ENCODE measurements at regions of chr1 and their contacts with region 1.

Region 1: GRCh38 chr1:62175568-62176179 is 19.0 kb upstream of the L1TD1 start:
- DNase-seq: no peak
- H3K4me3 ChIP-seq: no peak overlapping the region
- H3K27ac ChIP-seq: no peak overlapping the region
- H3K4me1 ChIP-seq: no peaks in the 10 kb centered on the region
- H3K27me3 ChIP-seq: no peaks in the 10 kb centered on the region
- CTCF ChIP-seq: peak in 2 of 3 experiments; percentile 39 to 66
- POLR2A ChIP-seq: no peak

Region 2: GRCh38 chr1:62407405-62408009 is 231.8 kb after region 1 on chr1:
- intact Hi-C with region 1: loop called (anchors 2 kb)
- DNase-seq: no peak
- H3K4me3 ChIP-seq: no peak overlapping the region
- H3K27ac ChIP-seq: no peak overlapping the region
- H3K4me1 ChIP-seq: no peaks in the 10 kb centered on the region
- H3K27me3 ChIP-seq: no peaks in the 10 kb centered on the region
- CTCF ChIP-seq: peak; percentile 25 to 87 (median 71)
- POLR2A ChIP-seq: no peak

Measured in vagina (tissue), 2 donors.